ENCODE measurements at regions of chr14 and their contacts with region 1.

Region 1: GRCh38 chr14:73851644-73852382 is at the start of gene PTGR2:
- DNase-seq: peak; percentile 99

Region 2: DNA sequence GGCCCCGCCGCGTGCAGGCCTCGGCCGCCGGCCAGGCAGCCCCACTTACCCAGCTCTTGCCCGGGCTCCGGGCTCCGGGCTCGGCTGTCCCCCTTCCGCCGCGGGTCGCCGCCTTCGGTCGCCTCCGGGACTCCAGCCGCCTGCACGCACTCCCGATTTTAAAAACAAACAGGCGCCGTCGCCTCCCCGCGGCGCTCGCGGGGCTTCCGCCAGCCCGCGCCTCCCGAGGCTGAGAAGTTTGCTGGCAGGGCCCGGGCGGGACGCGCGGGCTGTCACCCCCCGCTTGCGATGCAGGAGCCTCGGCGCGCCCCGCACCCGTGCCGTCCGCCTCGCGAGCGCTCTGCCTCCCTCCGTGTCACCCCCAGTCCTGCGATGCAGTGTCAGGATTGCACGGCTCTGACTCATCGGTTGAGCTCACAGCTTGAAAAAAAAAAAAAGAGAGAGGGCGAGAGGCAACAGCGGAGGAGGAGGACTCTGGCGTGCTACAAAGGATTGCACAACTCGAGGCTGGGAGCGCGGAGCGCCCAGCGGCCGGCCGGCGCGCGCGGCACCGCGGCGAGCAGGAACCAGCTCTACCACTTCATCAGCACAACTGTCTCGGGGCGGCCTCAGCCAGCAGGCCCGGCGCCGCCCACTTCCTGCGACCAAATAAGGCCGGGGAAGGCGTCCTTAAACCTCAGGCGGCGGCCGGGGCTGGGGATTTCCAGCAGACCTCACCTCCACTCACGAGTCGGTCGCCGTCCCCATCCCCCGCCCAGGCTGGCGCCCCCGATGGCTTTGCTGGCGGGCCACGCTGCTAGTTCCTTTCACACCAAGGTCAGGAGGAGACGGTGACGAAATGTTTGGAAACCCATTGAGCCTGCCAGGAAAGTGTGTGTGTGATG is 91.9 kb before region 1 on chr14:
- CTCF ChIA-PET with region 1: no interaction called
- POLR2A ChIA-PET with region 1: interaction called, 28 read pairs
- DNase-seq: peak; percentile 88

Region 3: GRCh38 chr14:73785873-73786695 is 65.7 kb before region 1 on chr14:
- CTCF ChIA-PET with region 1: no interaction called
- POLR2A ChIA-PET with region 1: interaction called, 24 read pairs
- DNase-seq: peak; percentile 56

Region 4: DNA sequence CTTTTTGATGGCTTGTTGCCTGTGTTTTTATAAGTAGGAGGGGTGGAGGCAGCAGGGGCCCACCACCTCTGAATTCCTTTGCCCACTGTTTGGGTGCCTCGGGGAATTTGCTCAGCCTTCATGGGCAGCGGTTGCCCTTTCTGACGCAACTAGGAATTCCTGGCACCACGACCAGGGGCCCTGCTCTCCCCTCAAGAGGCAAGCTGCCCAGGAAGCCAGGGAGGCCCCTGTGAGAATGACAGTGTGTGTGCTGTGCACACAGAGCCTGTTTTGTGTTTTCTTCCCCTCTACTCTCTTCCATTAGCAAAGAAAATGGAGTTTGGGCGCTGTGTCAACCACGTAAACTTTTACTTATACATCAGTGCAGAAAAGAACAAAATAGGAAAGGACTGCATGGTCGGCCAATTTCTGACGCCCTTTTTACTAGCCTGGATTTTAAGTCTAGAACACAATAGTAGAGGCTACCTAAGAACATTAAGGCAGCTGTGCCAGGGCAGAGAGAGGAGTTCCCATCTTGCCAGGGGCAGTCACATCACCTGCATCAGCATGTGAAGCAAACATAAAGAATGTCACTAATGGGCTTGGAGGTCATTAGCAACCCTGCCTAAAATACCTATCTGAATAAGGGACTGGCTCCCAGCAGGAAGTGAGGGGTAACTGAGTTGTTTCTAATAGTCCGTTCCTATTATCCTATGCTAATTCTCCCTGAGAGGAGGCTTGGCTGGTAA is 18.1 kb before region 1 on chr14:
- CTCF ChIA-PET with region 1: no interaction called
- POLR2A ChIA-PET with region 1: interaction called, 16 read pairs
- DNase-seq: no peak

Region 5: DNA sequence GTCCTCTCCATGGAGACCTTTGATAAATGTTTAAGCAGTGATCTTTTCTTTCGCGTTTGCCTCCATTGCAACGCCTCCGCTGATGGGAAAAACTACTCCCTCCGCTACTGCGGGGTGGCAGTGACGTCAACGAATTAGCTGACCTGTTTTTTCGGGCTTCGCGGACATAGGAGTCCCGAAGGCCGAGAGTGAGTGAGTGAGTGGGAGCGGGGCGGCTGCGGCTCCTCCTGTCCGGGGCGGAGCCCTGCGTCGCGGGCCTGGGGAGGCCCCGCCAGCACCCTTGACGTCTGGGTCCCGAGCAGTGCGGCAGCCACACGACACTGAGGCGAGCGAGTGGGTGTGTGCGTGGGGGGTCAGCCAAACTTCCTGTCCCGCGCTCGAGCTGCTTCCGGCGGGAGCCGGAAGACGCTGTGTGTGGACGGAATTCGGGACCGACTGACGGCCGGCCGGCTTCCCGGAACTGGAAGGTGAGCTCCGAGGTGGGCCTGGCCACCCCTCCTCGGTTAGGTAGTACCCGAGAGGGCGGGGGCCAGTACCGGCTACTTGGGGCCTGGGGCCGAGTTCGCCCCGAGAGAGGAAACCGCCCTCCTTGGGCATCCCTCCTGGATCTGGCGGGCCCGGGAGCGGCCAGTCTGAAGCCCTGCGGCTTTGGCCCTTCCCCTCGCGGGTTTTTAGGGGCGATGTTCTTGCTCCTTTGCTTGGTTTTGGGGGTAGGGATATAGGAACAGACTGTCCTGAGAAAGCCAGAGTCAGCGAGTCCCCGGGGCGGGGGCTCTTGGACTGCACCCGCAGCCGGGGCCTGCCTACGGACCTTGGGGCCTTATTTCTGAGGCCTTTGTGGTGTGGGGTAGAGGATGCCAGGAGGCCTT is 34.9 kb after region 1 on chr14 and contains the start of gene ZNF410:
- CTCF ChIA-PET with region 1: no interaction called
- POLR2A ChIA-PET with region 1: interaction called, 25 read pairs
- DNase-seq: peak; percentile 92